AG04449 (cell line): ENCODE measurements at regions of chr2 and their contacts with region 1.

Region 1: GRCh38 chr2:68196120-68196716 is 38.5 kb downstream of the PNO1 start:
- DNase-seq: peak; percentile 5
- H3K4me3 ChIP-seq: no peak overlapping the region
- CTCF ChIP-seq: peak; percentile 40

Region 2: DNA sequence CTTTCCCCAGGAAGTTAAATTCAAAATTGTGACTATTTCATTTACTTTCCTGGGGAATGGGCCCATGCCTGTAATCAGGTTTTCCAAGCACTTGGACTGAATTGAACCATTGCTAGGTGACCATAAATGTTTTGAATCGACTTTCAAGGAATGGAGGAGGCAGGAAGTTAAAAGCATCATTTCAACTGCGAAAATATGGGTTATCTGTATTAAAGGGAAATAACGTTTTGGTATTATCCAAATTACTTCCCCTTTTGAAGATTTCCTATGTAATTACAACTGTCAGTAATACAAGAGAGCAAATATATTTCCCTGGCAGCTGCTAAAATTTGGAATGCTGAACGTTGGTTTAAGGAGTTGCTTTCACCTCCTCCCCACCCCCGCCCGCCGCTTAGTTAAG is 19.6 kb before region 1 on chr2:
- CTCF ChIA-PET with region 1: interaction called, 50 read pairs
- POLR2A ChIA-PET with region 1: no interaction called
- DNase-seq: no peak
- H3K4me3 ChIP-seq: no peak overlapping the region
- CTCF ChIP-seq: no peak

Region 3: GRCh38 chr2:68214381-68214780 is 18.2 kb after region 1 on chr2:
- CTCF ChIA-PET with region 1: interaction called, 84 read pairs
- POLR2A ChIA-PET with region 1: no interaction called
- DNase-seq: no peak
- H3K4me3 ChIP-seq: no peak overlapping the region
- CTCF ChIP-seq: no peak

Region 4: DNA sequence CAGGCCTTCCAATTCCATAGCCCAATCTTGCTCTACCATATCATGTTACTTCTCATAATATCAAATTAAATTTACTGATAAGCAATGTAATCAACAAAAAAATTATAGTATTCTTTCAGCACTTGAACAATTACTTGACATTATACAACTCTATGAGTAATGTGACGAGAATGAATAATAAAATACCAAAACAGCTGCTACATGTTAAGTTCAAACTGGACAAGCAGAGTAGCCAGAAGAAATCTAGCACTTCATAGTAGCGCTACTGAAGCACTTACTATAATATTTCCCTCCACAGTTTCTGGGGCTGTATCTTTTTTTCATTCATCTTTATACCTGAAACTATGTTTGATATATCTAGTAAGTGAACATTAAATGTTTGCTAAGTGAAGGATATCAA is 41.2 kb after region 1 on chr2:
- CTCF ChIA-PET with region 1: interaction called, 82 read pairs
- POLR2A ChIA-PET with region 1: no interaction called
- DNase-seq: no peak
- H3K4me3 ChIP-seq: no peak overlapping the region
- CTCF ChIP-seq: no peak

Region 5: DNA sequence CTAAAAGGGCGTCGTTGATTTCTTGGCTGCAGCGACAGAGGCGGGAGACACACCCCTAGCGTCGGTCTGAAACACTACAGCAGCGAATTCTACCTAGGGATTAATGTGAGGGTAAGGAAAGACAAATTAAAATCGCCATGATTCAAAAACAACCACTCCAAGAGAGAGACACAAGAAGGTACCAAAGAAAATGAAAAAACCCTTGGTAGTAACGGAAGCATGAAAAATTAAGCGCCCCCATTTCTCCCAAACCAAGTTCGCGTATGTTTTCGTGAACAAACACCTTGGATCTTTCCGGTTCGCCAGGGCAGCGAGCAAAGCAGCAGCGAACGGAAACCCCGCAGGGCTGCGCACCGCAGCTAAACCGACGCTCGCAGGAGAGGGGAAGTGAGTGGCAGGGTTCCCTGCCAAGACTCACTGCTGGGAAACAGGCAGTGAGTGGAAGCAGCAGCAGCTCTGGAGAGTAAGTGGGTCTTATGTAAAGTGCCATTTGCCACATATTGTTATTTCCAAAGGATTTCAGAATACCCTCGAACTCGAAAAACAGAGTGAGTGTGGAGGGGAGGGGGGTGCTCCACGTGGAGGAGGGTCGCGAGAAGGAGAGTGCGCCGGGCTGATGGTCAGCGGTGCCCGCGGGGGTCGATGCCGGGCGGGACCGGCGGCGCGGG is 55.1 kb after region 1 on chr2:
- CTCF ChIA-PET with region 1: interaction called, 82 read pairs
- POLR2A ChIA-PET with region 1: no interaction called
- DNase-seq: no peak
- H3K4me3 ChIP-seq: peak overlapping the region; percentile 87
- CTCF ChIP-seq: peak; percentile 74

Region 6: DNA sequence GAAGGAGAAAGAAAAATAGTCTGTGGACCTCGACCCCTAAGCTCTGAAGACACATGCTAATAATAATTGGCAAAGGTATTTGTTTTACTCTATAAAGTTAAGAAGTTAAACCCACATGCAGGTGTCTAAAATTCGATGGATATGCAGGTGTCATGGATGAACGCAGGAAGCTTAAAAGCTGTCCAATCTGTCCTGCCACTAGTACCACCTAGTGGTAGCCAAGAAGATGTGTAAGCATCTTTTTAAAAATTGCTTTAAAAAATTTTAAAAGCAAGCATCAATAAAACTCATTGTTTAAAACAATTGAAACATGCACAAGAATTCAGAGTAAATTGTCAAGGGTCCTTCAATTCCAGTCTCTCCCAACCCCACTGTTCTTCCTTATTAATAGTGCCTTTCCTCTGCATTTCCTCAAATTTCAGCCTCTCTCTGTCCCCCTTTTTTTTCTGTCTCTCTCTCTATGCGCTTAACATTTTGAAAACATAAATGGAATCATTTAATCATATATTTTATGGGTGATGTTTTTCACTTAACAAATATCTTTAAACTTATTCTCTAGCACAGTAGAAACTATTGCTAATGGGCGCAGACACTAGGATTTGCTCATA is 86.7 kb after region 1 on chr2:
- CTCF ChIA-PET with region 1: interaction called, 131 read pairs
- POLR2A ChIA-PET with region 1: no interaction called
- DNase-seq: no peak
- H3K4me3 ChIP-seq: no peak overlapping the region
- CTCF ChIP-seq: peak; percentile 54

Region 7: GRCh38 chr2:68441179-68441993 is 245.2 kb after region 1 on chr2:
- CTCF ChIA-PET with region 1: interaction called, 36 read pairs
- POLR2A ChIA-PET with region 1: interaction called, 3 read pairs
- DNase-seq: no peak
- H3K4me3 ChIP-seq: no peak overlapping the region
- CTCF ChIP-seq: peak; percentile 79

Region 8: DNA sequence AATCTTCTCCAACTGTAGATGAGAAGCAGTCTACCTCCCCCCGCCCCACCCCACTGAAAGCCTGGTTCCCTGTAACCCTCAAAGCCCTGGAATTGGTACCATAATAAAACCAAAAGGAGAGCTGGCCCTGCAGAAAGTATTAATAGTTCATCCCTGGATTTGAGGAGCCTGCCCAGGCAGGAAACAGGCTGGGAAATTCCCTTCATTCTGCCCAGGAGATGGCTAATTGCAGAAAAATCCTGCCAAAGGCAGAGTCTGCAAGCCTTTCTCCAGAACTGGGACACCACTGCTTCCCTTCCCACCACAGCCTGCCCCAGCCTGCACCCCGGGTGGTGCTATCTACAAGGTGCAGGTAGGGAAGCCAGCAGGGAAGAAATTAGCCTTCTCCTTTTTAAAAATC is 740.2 kb after region 1 on chr2:
- CTCF ChIA-PET with region 1: no interaction called
- POLR2A ChIA-PET with region 1: no interaction called
- DNase-seq: peak; percentile 31
- H3K4me3 ChIP-seq: no peak overlapping the region
- CTCF ChIP-seq: no peak